CD4-positive, alpha-beta T cell (primary cell): ENCODE measurements at regions of chrX and their contacts with region 1.

Region 1: GRCh38 chrX:79336869-79337815 is 30.0 kb downstream of the ITM2A start:
- DNase-seq: peak in 3 of 14 experiments; percentile 38 to 64 (median 42)
- ATAC-seq: peak; percentile 70
- H3K4me3 ChIP-seq: peak overlapping the region; percentile 49
- H3K4me3 Mint-ChIP-seq: peak overlapping the region; percentile 88
- H3K27ac ChIP-seq: peak overlapping the region; percentile 25 to 48
- H3K27ac Mint-ChIP-seq: peak overlapping the region; percentile 86
- H3K4me1 ChIP-seq: peaks cover 7% of the 10 kb centered on the region
- H3K4me1 Mint-ChIP-seq: peaks cover 22% of the 10 kb centered on the region
- H3K27me3 ChIP-seq: no peaks in the 10 kb centered on the region
- H3K27me3 Mint-ChIP-seq: no peaks in the 10 kb centered on the region
- CTCF ChIP-seq: no peak

Region 2: DNA sequence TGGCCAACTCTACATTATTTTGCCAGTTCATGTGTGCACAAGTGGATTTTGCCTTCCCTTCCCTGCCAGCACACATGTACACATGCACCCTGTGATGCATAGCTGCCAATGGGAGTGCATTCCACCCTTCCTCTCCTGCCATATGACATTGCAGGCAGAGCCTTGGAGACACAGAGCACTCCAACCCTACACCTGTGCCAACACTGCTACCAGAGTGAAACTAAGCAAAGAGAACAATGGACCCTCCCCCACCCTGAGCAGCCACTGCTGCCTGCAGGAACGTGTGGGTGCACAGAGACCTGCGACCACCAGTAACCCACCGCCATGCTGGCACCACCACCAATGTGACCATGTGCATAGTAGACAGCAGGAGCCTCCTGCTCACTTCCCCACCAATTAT is 48.4 kb before region 1 on chrX:
- CTCF ChIA-PET with region 1: interaction called, 3 read pairs
- POLR2A ChIA-PET with region 1: no interaction called
- intact Hi-C with region 1: loop called in 1 of 2 experiments (anchors 10 kb)
- DNase-seq: no peak
- ATAC-seq: no peak
- H3K4me3 ChIP-seq: no peak overlapping the region
- H3K4me3 Mint-ChIP-seq: peak overlapping the region; percentile 35
- H3K27ac ChIP-seq: no peak overlapping the region
- H3K27ac Mint-ChIP-seq: peak overlapping the region; percentile 73
- H3K4me1 ChIP-seq: no peaks in the 10 kb centered on the region
- H3K4me1 Mint-ChIP-seq: peaks cover 48% of the 10 kb centered on the region
- H3K27me3 ChIP-seq: no peaks in the 10 kb centered on the region
- H3K27me3 Mint-ChIP-seq: no peaks in the 10 kb centered on the region
- CTCF ChIP-seq: no peak